Calu3 (cell line): ENCODE measurements at regions of chr3 and their contacts with region 1.

Region 1: GRCh38 chr3:41912280-41912679 is 49.6 kb downstream of the ULK4 start:
- DNase-seq: no peak
- H3K4me3 Mint-ChIP-seq: no peak overlapping the region
- H3K27ac Mint-ChIP-seq: no peak overlapping the region
- H3K4me1 Mint-ChIP-seq: no peaks in the 10 kb centered on the region
- H3K27me3 Mint-ChIP-seq: no peaks in the 10 kb centered on the region
- CTCF ChIP-seq: no peak

Region 2: DNA sequence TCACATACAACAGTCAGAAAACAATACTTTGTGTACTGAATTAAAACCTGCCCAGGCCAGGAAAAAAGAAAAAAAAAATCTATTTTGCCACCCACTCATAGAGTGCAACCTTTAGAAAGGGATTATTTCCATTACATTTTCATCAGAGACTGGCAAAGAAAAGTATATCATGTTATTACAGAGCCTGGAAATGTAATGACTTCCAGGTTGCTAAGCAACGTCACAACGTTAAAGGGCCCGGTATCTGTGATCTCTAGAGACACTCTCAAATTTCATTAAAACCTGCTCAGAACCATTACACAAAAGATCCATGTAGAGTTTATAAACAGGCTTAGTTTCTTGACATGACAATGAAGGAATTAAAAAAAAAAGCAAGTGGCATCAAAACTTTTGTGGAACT is 542.4 kb before region 1 on chr3:
- CTCF ChIA-PET with region 1: no interaction called
- intact Hi-C with region 1: no loop called
- DNase-seq: no peak
- H3K4me3 Mint-ChIP-seq: no peak overlapping the region
- H3K27ac Mint-ChIP-seq: no peak overlapping the region
- H3K4me1 Mint-ChIP-seq: no peaks in the 10 kb centered on the region
- H3K27me3 Mint-ChIP-seq: peaks cover 15% of the 10 kb centered on the region
- CTCF ChIP-seq: no peak

Region 3: GRCh38 chr3:41933146-41933676 is 20.9 kb after region 1 on chr3:
- CTCF ChIA-PET with region 1: interaction called, 10 read pairs
- intact Hi-C with region 1: no loop called
- DNase-seq: no peak
- H3K4me3 Mint-ChIP-seq: no peak overlapping the region
- H3K27ac Mint-ChIP-seq: no peak overlapping the region
- H3K4me1 Mint-ChIP-seq: no peaks in the 10 kb centered on the region
- H3K27me3 Mint-ChIP-seq: no peaks in the 10 kb centered on the region
- CTCF ChIP-seq: no peak